ENCODE measurements at regions of chr20 and their contacts with region 1.

Region 1: GRCh38 chr20:47317127-47317895 is 39.2 kb downstream of the ZMYND8 start:
- DNase-seq: peak; percentile 43
- H3K4me3 Mint-ChIP-seq: peak overlapping the region; percentile 51
- H3K27ac Mint-ChIP-seq: peak overlapping the region; percentile 92
- H3K4me1 Mint-ChIP-seq: peaks cover 61% of the 10 kb centered on the region
- H3K27me3 Mint-ChIP-seq: no peaks in the 10 kb centered on the region

Region 2: GRCh38 chr20:46283426-46284039 is 1033.8 kb before region 1 on chr20:
- intact Hi-C with region 1: no loop called
- DNase-seq: no peak
- H3K4me3 Mint-ChIP-seq: no peak overlapping the region
- H3K27ac Mint-ChIP-seq: no peak overlapping the region
- H3K4me1 Mint-ChIP-seq: no peaks in the 10 kb centered on the region
- H3K27me3 Mint-ChIP-seq: peaks cover 2% of the 10 kb centered on the region

Region 3: GRCh38 chr20:47330933-47331864 is 13.9 kb after region 1 on chr20:
- intact Hi-C with region 1: loop called (anchors 2 kb)
- DNase-seq: no peak
- H3K4me3 Mint-ChIP-seq: peak overlapping the region; percentile 31
- H3K27ac Mint-ChIP-seq: peak overlapping the region; percentile 81
- H3K4me1 Mint-ChIP-seq: peaks cover 43% of the 10 kb centered on the region
- H3K27me3 Mint-ChIP-seq: no peaks in the 10 kb centered on the region